Transverse colon (tissue), 4 donors: ENCODE measurements at regions of chr12 and their contacts with region 1.

Region 1: DNA sequence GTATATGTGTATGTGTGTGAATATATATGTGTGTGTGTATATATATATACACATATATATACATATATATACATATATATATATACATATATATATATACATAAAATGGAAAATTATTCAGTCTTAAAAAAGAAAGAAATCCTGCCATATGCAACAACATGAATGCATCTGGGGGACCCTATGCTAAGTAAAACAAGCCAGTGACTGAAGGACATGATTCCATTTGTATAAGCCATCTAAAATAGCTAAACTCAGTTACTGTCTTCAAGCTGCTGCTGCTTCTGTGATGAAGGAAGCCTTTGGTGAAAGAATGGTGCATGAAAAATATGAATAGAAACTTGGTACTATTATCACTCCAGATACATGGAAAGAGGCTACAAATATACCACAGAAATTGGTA is 118.6 kb downstream of the ATXN7L3B start:
- DNase-seq: no peak
- H3K4me3 ChIP-seq: no peak overlapping the region
- H3K27ac ChIP-seq: no peak overlapping the region
- H3K4me1 ChIP-seq: no peaks in the 10 kb centered on the region
- H3K27me3 ChIP-seq: no peaks in the 10 kb centered on the region
- CTCF ChIP-seq: no peak
- EP300 ChIP-seq: no peak
- POLR2A ChIP-seq: no peak

Region 2: DNA sequence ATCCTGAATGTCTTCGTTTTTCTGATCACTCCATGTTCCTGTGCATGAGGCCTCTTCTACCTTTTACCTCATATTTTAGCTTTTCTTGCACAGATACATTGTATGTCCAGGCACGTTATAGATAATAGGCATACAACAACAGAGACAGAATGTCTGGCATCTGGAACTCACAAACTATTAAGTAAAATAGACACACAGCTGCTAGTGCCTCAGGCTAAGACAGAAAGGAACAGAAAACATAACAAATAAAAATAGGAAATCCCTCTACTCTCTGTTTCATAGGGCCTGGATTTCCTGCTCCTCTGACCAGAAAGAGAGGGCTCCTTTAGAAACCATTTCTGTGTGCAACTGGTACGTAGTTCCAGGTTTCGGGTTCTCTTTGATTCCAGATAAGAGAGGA is 70.0 kb before region 1 on chr12:
- in situ Hi-C with region 1: no loop called
- intact Hi-C with region 1: no loop called
- DNase-seq: no peak
- H3K4me3 ChIP-seq: no peak overlapping the region
- H3K27ac ChIP-seq: no peak overlapping the region
- H3K4me1 ChIP-seq: no peaks in the 10 kb centered on the region
- H3K27me3 ChIP-seq: no peaks in the 10 kb centered on the region
- CTCF ChIP-seq: no peak
- EP300 ChIP-seq: no peak
- POLR2A ChIP-seq: no peak

Region 3: GRCh38 chr12:75135026-75135425 is 478.8 kb after region 1 on chr12:
- in situ Hi-C with region 1: no loop called
- intact Hi-C with region 1: loop called (anchors 10 kb)
- DNase-seq: no peak
- H3K4me3 ChIP-seq: no peak overlapping the region
- H3K27ac ChIP-seq: no peak overlapping the region
- H3K4me1 ChIP-seq: no peaks in the 10 kb centered on the region
- H3K27me3 ChIP-seq: no peaks in the 10 kb centered on the region
- CTCF ChIP-seq: no peak
- EP300 ChIP-seq: no peak
- POLR2A ChIP-seq: no peak

Region 4: DNA sequence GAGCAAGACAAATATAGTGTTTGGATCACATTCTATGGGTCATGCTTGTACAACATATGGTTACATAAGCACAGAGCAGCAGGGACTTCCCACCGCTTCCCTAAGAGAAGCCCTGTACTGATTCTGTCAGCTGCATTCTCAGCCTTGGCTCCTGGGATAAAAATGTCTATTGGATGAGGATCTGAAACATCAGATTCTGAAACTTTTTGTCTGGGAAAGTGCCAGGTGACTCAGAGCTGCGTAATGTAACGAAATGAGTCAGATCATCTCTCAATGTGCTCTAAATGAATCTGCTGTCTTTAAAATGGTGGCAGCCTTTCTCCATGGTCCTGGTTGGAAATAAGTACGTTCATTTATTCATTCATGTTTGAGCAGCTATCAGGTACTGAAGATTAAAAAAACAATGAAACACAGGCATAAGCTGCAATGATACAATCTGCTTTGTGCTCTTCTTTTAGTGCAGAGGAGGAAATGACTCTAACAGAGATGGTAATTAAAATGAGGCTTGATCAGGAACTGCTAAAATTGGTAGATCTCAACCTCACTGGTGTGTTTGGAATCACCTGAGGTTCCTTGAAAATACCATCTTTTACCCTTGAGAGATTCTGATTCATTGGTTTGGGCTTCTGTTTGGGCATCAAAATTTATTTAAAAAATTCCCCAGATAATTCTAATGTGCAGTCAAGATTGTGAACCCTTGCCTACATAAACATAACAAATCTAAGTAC is 1527.4 kb after region 1 on chr12:
- in situ Hi-C with region 1: no loop called
- intact Hi-C with region 1: no loop called
- DNase-seq: no peak
- H3K4me3 ChIP-seq: no peak overlapping the region
- H3K27ac ChIP-seq: no peak overlapping the region
- H3K4me1 ChIP-seq: no peaks in the 10 kb centered on the region
- H3K27me3 ChIP-seq: no peaks in the 10 kb centered on the region
- CTCF ChIP-seq: no peak
- EP300 ChIP-seq: no peak
- POLR2A ChIP-seq: no peak